Activated T-helper 2 cell treated with anti-CD3 and anti-CD28 coated beads, Interferon-gamma antibody, Interleukin-2, Interleukin-4, amounts not matched to agents 10 μg/mL and 5 μg/mL and 100 μg/mL, durations not matched to agents 14 hours and 24 hours and 36 hours (primary cell): ENCODE measurements at regions of chr15 and their contacts with region 1.

Region 1: DNA sequence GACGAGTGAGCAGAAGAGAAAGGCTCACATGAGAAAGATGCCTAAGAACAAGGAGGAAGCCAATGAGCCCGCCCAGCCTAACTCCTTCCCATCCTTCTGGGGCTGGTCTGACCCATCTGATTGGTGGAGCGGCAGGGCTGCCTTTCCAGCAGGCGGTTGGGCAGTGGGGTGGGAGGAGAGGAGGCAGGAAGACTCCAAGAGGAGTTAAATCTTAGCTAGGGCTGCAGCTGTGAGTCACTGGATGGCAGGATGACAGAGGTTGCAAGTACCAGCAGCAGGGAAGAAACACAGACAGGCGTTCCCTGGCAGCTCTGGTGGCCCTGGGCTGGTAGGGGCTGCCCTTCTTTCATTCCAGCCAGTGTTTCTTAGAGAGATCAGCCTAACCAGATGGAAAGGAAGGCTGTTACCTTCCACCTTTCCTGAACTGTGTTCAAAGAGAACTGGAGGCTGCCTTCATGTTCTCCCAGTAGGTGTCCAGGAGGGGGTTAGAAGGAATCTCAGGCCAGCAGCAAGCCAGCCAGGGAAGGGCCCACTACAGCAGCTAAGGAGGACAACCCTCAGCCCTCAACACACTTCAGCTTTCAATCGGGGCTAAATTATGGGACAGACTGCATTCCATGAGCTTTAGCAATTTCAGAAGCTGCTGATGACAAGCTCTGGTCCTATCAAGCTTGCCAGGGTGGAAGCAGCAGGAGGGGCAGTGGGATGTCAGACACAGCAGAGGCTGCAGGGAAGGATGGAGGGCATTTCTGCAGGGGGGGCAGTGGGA is 50.3 kb downstream of the CHSY1 start:
- DNase-seq: no peak
- H3K4me3 Mint-ChIP-seq: peak overlapping the region; percentile 32
- H3K27ac Mint-ChIP-seq: peak overlapping the region; percentile 81
- H3K4me1 Mint-ChIP-seq: peaks cover 81% of the 10 kb centered on the region
- H3K27me3 Mint-ChIP-seq: no peaks in the 10 kb centered on the region

Region 2: DNA sequence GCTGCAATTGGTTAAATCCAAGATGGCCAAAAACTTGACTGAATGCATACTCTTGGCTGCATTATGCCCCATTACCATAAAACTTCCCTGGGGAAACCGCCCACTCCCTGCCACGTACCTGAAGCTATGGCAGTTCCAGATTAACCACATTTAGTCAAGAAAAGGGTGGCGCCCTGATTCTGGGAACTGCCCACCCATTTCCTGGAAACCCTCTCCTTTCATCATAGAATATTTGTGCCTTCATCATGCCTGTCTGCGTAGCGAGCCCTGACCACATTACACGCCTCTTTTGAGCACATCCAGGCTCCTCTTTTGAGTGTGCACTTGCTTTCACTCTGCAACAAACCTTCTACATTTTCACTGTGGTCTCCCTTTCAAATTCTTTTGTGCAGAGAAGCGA is 604.8 kb before region 1 on chr15:
- intact Hi-C with region 1: loop called (anchors 10 kb)
- DNase-seq: peak; percentile 92
- H3K4me3 Mint-ChIP-seq: peak overlapping the region; percentile 83
- H3K27ac Mint-ChIP-seq: peak overlapping the region; percentile 97
- H3K4me1 Mint-ChIP-seq: peaks cover 59% of the 10 kb centered on the region
- H3K27me3 Mint-ChIP-seq: no peaks in the 10 kb centered on the region

Region 3: GRCh38 chr15:101127506-101128076 is 74.0 kb before region 1 on chr15:
- intact Hi-C with region 1: loop called (anchors 1 kb)
- DNase-seq: peak; percentile 33
- H3K4me3 Mint-ChIP-seq: peak overlapping the region; percentile 50
- H3K27ac Mint-ChIP-seq: peak overlapping the region; percentile 89
- H3K4me1 Mint-ChIP-seq: peaks cover 56% of the 10 kb centered on the region
- H3K27me3 Mint-ChIP-seq: peaks cover 4% of the 10 kb centered on the region

Region 4: DNA sequence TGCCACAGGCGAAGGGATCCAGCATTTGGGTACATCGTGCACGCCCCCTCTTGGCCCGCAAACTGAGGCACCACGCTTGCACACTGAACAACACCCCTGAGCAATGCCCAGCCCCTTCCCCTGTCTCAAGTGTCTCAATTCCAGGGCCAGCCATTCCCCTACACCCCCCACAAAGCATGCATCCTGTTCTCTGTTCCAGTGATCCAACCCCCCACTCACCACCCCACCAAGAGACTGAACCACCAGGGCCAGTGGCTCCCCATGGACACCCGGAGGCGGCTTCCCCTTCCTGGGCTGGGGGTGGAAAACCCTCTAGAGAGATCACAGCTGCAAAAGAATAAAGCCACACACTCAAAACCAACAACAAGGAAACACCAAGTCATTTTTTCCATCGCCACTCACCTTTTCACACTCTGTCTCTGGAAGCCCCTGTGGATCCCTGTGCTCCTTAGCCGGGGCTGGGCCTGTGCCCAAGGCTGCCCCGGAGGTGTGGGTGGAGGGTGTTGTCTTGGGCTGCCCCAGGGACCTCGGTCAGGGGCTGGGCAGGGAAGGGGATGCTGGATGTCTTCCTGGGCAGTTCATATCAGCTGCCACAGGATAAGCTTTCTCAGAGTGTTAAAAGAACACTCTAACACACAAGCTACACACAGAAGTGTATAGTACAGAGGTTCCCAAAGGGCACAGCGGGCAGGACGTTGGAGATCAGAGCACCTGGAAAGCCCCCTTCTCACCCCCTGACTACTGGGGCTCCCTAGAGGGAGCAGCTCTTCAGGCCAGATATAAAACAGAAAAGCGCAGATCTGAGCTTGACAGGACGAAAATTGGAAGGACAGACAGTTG is 42.3 kb before region 1 on chr15:
- intact Hi-C with region 1: loop called (anchors 1 kb)
- DNase-seq: peak; percentile 18
- H3K4me3 Mint-ChIP-seq: no peak overlapping the region
- H3K27ac Mint-ChIP-seq: peak overlapping the region; percentile 85
- H3K4me1 Mint-ChIP-seq: peaks cover 45% of the 10 kb centered on the region
- H3K27me3 Mint-ChIP-seq: no peaks in the 10 kb centered on the region

Region 5: GRCh38 chr15:101167753-101168463 is 33.7 kb before region 1 on chr15:
- intact Hi-C with region 1: loop called (anchors 2 kb)
- DNase-seq: peak; percentile 80
- H3K4me3 Mint-ChIP-seq: peak overlapping the region; percentile 43
- H3K27ac Mint-ChIP-seq: peak overlapping the region; percentile 92
- H3K4me1 Mint-ChIP-seq: peaks cover 44% of the 10 kb centered on the region
- H3K27me3 Mint-ChIP-seq: no peaks in the 10 kb centered on the region

Region 6: GRCh38 chr15:101188637-101189408 is 12.8 kb before region 1 on chr15:
- intact Hi-C with region 1: loop called (anchors 1 kb)
- DNase-seq: no peak
- H3K4me3 Mint-ChIP-seq: peak overlapping the region; percentile 59
- H3K27ac Mint-ChIP-seq: peak overlapping the region; percentile 94
- H3K4me1 Mint-ChIP-seq: peaks cover 77% of the 10 kb centered on the region
- H3K27me3 Mint-ChIP-seq: no peaks in the 10 kb centered on the region

Region 7: DNA sequence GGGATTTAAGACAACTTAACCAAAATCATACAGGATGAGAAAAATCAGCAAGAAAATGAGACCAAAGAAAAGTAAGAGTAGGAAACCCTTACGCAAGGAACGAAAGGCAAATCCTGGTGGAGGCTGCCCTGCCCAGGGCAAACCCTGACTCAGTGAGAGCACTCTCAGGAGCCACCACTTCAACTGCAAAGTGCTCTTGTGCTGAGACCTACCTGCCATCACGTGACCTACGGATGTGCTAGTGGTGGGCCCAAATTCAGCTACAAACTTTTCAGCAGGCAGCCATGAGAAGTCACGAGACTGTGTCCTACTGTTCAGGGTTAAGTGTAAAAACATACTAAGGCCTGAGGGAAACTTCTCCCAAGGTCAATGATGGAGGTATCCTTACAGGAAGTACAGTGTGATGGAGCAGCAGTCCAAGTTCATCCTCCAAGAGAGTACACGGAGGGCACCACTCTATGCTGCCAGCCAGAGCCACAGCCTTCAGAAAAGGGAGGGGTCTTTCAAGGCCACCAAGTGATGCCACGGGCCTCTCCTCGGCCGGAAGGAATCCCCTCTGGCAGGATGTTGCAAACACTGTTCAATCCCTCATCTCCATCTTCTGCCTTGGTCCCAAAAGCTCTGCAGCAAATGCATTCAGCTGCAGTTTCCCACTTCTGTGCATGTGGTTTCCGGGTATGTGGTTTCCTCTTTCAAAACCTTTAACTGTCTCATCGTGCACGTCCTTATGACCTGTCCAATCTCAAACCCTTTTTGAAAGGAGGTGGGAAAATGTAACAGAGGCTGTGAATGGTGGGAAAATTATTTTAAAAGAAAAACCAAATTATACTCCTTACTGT is 40.8 kb after region 1 on chr15:
- intact Hi-C with region 1: loop called (anchors 1 kb)
- DNase-seq: peak; percentile 62
- H3K4me3 Mint-ChIP-seq: peak overlapping the region; percentile 72
- H3K27ac Mint-ChIP-seq: peak overlapping the region; percentile 87
- H3K4me1 Mint-ChIP-seq: peaks cover 90% of the 10 kb centered on the region
- H3K27me3 Mint-ChIP-seq: no peaks in the 10 kb centered on the region

Region 8: GRCh38 chr15:101391981-101392640 is 190.5 kb after region 1 on chr15:
- intact Hi-C with region 1: no loop called
- DNase-seq: no peak
- H3K4me3 Mint-ChIP-seq: no peak overlapping the region
- H3K27ac Mint-ChIP-seq: no peak overlapping the region
- H3K4me1 Mint-ChIP-seq: no peaks in the 10 kb centered on the region
- H3K27me3 Mint-ChIP-seq: peaks cover 5% of the 10 kb centered on the region